Aorta (tissue), 5 donors: ENCODE measurements at regions of chr18 and their contacts with region 1.

Region 1: GRCh38 chr18:13494871-13495445 is 231.4 kb downstream of the FAM210A start:
- DNase-seq: no peak
- ATAC-seq: peak; percentile 48
- H3K4me3 ChIP-seq: no peak overlapping the region
- H3K27ac ChIP-seq: peak overlapping the region in 1 of 2 donors; percentile 88
- H3K4me1 ChIP-seq: no peaks in the 10 kb centered on the region
- H3K27me3 ChIP-seq: no peaks in the 10 kb centered on the region

Region 2: DNA sequence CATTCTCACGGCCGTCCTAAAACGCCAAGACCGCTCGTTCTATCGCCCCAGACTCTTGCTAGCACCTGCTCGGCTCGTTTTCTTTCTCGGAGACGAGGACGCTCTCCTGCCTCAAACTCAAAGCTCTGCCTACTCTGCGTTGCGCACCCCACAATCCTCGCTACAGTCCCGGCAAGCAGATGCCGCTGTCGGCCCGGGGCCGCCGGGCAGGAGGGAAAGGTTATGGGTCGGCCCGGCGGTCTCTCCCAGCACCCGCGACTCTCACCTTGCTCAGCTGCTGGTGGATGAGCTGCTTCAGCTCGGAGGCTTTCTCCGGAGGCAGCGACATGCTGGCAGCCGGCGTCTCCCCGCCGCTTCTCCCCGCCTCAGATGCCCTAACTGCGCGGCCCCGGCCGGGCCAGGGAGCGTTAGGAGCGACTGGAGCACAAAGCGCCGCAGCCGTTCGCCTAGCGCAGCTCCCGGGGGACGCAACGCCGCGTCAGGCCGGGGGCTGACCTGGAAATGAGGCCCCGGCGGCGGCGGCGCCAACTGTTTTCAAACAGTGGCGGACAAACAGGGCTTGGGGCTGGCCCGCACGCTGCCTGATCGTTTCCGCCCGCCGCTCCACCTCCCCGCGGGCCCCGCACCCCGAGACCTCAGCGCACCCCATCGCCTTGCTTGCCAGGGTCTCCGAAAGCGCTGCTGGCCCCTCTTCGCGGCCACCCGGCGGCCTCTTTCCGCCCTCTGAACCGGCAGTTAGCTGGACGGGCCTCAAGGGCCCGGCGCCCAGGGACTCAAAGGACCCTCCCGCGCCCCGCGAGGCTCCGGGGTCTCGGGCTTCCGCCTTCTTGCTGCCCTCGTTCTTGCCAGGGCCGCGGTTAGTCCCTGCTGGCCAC is 792.5 kb before region 1 on chr18 and contains the starts of genes CEP76 and PSMG2:
- intact Hi-C with region 1: no loop called
- DNase-seq: peak; percentile 94 to 97
- ATAC-seq: peak; percentile 98
- H3K4me3 ChIP-seq: peak within 1 kb of the TSS; percentile 90 to 97
- H3K27ac ChIP-seq: peak within 1 kb of the TSS; percentile 91 to 98
- H3K4me1 ChIP-seq: peaks cover 0 to 3% of the 10 kb centered on the region in 2 donors
- H3K27me3 ChIP-seq: no peaks in the 10 kb centered on the region
- total RNA-seq, gene CEP76: 3.9 to 7.3 TPM
- total RNA-seq, gene PSMG2: 53.9 to 62.0 TPM

Region 3: DNA sequence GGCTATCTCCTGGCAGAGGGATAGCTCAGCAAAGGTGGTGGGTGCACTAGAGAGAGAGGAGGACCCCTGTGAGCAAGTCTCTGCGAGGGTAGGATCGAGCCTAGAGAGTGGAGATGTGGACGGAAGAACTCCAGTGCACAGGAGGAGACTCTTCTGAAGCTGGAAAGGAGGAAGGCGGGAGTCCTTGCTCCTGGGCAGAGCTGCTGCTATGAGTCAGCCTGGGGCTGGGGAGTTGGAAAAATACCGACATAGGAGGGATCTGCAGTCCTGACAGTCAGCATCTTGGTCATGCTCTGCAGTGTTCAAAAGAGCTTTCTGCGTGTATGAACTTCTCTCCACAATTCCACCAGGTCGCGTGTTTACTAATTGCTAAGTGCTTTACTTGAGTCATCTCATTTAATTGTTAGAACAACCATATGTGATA is 42.6 kb before region 1 on chr18:
- intact Hi-C with region 1: loop called in 1 of 2 experiments (anchors 5 kb)
- DNase-seq: peak in 1 of 2 donors; percentile 80
- ATAC-seq: peak; percentile 83
- H3K4me3 ChIP-seq: no peak overlapping the region
- H3K27ac ChIP-seq: peak overlapping the region in 1 of 2 donors; percentile 75
- H3K4me1 ChIP-seq: no peaks in the 10 kb centered on the region
- H3K27me3 ChIP-seq: no peaks in the 10 kb centered on the region